Activated CD4-positive, alpha-beta memory T cell treated with anti-CD3 and anti-CD28 coated beads for 36 hours (primary cell): ENCODE measurements at regions of chr9 and their contacts with region 1.

Region 1: DNA sequence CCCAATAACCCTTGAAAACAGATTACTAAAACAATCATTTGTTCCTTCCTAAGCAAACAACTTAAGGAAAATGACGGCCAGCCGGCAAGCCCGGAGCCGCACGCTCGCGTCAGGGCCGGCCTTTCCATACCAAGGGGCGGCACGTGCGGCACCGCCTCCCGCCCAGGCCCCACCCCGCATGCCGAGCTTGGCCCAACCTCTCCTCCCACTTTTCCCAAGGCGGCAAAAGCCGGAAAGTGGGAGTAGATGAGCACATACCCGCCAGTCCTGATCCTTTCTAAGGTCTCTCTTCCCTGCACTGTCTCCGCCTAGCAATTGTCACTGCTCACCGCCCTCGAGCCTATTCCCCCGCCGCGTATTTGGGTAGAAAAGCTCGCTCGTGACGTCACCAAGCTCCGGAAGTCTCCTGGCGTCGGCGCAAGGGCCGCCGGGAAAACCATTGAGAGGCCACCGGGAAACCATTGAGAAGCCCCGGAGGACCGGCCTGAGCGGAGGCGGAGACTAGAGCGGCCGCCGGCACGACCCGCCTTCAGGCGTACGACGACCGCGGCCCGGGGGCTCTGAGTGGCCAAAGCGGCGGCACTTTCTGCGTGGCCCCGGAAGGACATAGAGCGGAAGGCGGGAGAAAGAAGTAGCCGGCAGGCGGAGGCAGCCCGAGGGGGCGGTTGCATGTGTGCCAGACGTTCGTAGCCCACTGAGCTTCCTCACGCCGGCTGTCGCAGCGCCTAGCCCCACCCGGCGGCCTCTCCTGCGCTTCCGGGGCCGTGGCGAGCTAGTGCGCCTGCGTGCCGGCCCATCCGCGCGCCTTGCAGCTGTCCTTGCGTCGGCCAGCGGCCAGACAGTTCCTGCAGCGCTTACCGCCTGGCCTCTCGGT is at the starts of genes NCBP1 and TSTD2:
- DNase-seq: peak; percentile 98
- H3K4me3 Mint-ChIP-seq: peak within 1 kb of the TSS; percentile 86
- H3K27ac Mint-ChIP-seq: peak within 1 kb of the TSS; percentile 97
- H3K4me1 Mint-ChIP-seq: peaks cover 50% of the 10 kb centered on the region
- H3K27me3 Mint-ChIP-seq: no peaks in the 10 kb centered on the region
- total RNA-seq, gene NCBP1: 43.4 to 47.2 TPM
- total RNA-seq, gene TSTD2: 10.3 to 13.4 TPM

Region 2: GRCh38 chr9:96854073-96854876 is 778.9 kb before region 1 on chr9 and contains the start of gene ZNF782:
- CTCF ChIA-PET with region 1: no interaction called
- POLR2A ChIA-PET with region 1: no interaction called
- intact Hi-C with region 1: loop called (anchors 10 kb)
- DNase-seq: peak; percentile 92
- H3K4me3 Mint-ChIP-seq: peak within 1 kb of the TSS; percentile 100
- H3K27ac Mint-ChIP-seq: peak within 1 kb of the TSS; percentile 95
- H3K4me1 Mint-ChIP-seq: peaks cover 51% of the 10 kb centered on the region
- H3K27me3 Mint-ChIP-seq: peaks cover 5% of the 10 kb centered on the region
- total RNA-seq, gene ZNF782: 2.8 to 3.2 TPM

Region 3: DNA sequence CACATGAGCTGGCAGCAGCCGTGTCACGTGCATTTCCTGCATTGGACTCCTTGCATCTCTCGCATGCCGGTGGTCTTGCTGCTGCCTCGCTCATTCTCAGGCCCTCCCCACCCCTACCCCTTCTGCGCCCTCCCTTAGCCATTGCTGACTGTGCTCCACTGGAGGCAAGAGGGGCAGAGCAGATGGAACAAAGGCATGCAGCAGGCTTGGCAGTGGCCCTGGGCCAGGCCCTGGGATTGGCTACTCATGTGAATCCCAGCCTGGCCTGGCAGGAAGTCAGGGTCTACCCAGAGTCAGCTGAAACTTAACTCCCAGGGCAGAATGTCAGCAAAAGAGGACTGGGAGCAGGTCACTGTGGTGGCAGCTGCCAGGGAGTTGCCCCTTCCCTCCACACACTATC is 62.3 kb before region 1 on chr9:
- CTCF ChIA-PET with region 1: no interaction called
- POLR2A ChIA-PET with region 1: no interaction called
- intact Hi-C with region 1: no loop called
- DNase-seq: no peak
- H3K4me3 Mint-ChIP-seq: no peak overlapping the region
- H3K27ac Mint-ChIP-seq: no peak overlapping the region
- H3K4me1 Mint-ChIP-seq: peaks cover 15% of the 10 kb centered on the region
- H3K27me3 Mint-ChIP-seq: peaks cover 2% of the 10 kb centered on the region

Region 4: GRCh38 chr9:97598461-97599288 is 34.5 kb before region 1 on chr9:
- CTCF ChIA-PET with region 1: interaction called, 15 read pairs
- POLR2A ChIA-PET with region 1: no interaction called
- intact Hi-C with region 1: no loop called
- DNase-seq: peak; percentile 77
- H3K4me3 Mint-ChIP-seq: no peak overlapping the region
- H3K27ac Mint-ChIP-seq: no peak overlapping the region
- H3K4me1 Mint-ChIP-seq: peaks cover 6% of the 10 kb centered on the region
- H3K27me3 Mint-ChIP-seq: no peaks in the 10 kb centered on the region

Region 5: GRCh38 chr9:97696803-97697601 is 63.8 kb after region 1 on chr9 and contains the start of gene XPA:
- CTCF ChIA-PET with region 1: interaction called, 3 read pairs
- POLR2A ChIA-PET with region 1: interaction called, 10 read pairs
- intact Hi-C with region 1: loop called (anchors 1 kb)
- DNase-seq: peak; percentile 98
- H3K4me3 Mint-ChIP-seq: peak within 1 kb of the TSS; percentile 91
- H3K27ac Mint-ChIP-seq: peak within 1 kb of the TSS; percentile 91
- H3K4me1 Mint-ChIP-seq: peaks cover 47% of the 10 kb centered on the region
- H3K27me3 Mint-ChIP-seq: no peaks in the 10 kb centered on the region
- total RNA-seq, gene XPA: 8.5 to 9.6 TPM

Region 6: GRCh38 chr9:97710356-97711222 is 77.4 kb after region 1 on chr9:
- CTCF ChIA-PET with region 1: no interaction called
- POLR2A ChIA-PET with region 1: no interaction called
- intact Hi-C with region 1: no loop called
- DNase-seq: peak; percentile 55
- H3K4me3 Mint-ChIP-seq: no peak overlapping the region
- H3K27ac Mint-ChIP-seq: no peak overlapping the region
- H3K4me1 Mint-ChIP-seq: peaks cover 22% of the 10 kb centered on the region
- H3K27me3 Mint-ChIP-seq: peaks cover 8% of the 10 kb centered on the region

Region 7: GRCh38 chr9:97954550-97954989 is 321.3 kb after region 1 on chr9:
- CTCF ChIA-PET with region 1: no interaction called
- POLR2A ChIA-PET with region 1: no interaction called
- intact Hi-C with region 1: no loop called
- DNase-seq: peak; percentile 66
- H3K4me3 Mint-ChIP-seq: no peak overlapping the region
- H3K27ac Mint-ChIP-seq: no peak overlapping the region
- H3K4me1 Mint-ChIP-seq: peaks cover 4% of the 10 kb centered on the region
- H3K27me3 Mint-ChIP-seq: no peaks in the 10 kb centered on the region

Region 8: DNA sequence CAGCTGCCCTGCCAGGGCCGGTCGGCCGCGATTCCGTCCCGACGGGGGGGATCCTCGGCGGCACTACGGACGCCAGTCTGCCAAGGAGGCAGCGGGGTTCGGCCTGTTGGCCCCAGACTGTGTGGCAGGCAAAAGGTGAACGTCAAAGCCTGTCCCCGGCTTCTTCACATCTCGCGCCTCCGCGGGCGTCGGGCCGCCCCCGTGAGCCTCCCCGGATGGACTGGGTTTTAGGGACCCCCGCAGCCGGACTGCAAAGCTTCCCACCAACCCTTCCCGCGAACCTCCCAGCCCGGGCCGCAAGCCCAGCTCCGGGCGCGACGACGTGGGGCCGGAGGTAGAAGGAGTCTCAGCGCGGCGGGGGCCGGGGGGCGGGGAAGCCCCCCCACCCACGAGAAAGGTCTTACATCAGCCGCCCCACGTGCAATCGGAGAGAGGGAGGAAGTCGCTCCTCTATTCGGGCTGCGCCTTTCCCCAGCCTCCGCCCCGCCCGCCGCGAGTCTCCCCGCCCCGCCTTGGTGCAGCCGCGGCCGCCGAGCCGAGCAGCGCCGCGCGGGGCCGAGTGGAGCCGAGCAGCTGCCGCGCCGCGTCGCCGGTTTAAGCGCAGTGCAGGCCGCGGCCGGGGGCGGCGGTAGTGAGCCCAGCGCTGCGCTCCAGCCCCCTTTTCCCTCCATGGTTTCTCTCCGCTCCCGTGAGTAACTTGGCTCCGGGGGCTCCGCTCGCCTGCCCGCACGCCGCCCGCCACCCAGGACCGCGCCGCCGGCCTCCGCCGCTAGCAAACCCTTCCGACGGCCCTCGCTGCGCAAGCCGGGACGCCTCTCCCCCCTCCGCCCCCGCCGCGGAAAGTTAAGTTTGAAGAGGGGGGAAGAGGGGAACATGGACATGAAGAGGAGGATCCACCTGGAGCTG is 349.7 kb after region 1 on chr9 and contains the start of gene ANP32B:
- CTCF ChIA-PET with region 1: interaction called, 5 read pairs
- POLR2A ChIA-PET with region 1: interaction called, 9 read pairs
- intact Hi-C with region 1: loop called (anchors 1 kb)
- DNase-seq: peak; percentile 96
- H3K4me3 Mint-ChIP-seq: peak within 1 kb of the TSS; percentile 83
- H3K27ac Mint-ChIP-seq: peak within 1 kb of the TSS; percentile 93
- H3K4me1 Mint-ChIP-seq: peaks cover 37% of the 10 kb centered on the region
- H3K27me3 Mint-ChIP-seq: no peaks in the 10 kb centered on the region
- total RNA-seq, gene ANP32B: 352 to 358 TPM